CD4-positive, alpha-beta T cell (primary cell): ENCODE measurements at regions of chr15 and their contacts with region 1.

Region 1: GRCh38 chr15:80977627-80978036 is 12.0 kb downstream of the MESD start:
- DNase-seq: peak in 10 of 14 experiments; percentile 21 to 71 (median 42)
- ATAC-seq: peak; percentile 51
- H3K4me3 ChIP-seq: no peak overlapping the region
- H3K4me3 Mint-ChIP-seq: no peak overlapping the region
- H3K27ac ChIP-seq: no peak overlapping the region
- H3K27ac Mint-ChIP-seq: peak overlapping the region; percentile 34
- H3K4me1 ChIP-seq: peaks cover 13% of the 10 kb centered on the region
- H3K4me1 Mint-ChIP-seq: peaks cover 50% of the 10 kb centered on the region
- H3K27me3 ChIP-seq: no peaks in the 10 kb centered on the region
- H3K27me3 Mint-ChIP-seq: no peaks in the 10 kb centered on the region
- CTCF ChIP-seq: no peak

Region 2: GRCh38 chr15:81091889-81092558 is 114.4 kb after region 1 on chr15:
- CTCF ChIA-PET with region 1: no interaction called
- POLR2A ChIA-PET with region 1: no interaction called
- intact Hi-C with region 1: no loop called
- DNase-seq: no peak
- ATAC-seq: no peak
- H3K4me3 ChIP-seq: no peak overlapping the region
- H3K4me3 Mint-ChIP-seq: no peak overlapping the region
- H3K27ac ChIP-seq: no peak overlapping the region
- H3K27ac Mint-ChIP-seq: no peak overlapping the region
- H3K4me1 ChIP-seq: no peaks in the 10 kb centered on the region
- H3K4me1 Mint-ChIP-seq: no peaks in the 10 kb centered on the region
- H3K27me3 ChIP-seq: peaks cover 10 to 21% of the 10 kb centered on the region in 2 experiments
- H3K27me3 Mint-ChIP-seq: peaks cover 53% of the 10 kb centered on the region
- CTCF ChIP-seq: no peak

Region 3: GRCh38 chr15:82371656-82372055 is 1394.0 kb after region 1 on chr15:
- CTCF ChIA-PET with region 1: no interaction called
- POLR2A ChIA-PET with region 1: no interaction called
- intact Hi-C with region 1: loop called in 1 of 2 experiments (anchors 5 kb)
- DNase-seq: no peak
- ATAC-seq: no peak
- H3K4me3 ChIP-seq: no peak overlapping the region
- H3K4me3 Mint-ChIP-seq: no peak overlapping the region
- H3K27ac ChIP-seq: no peak overlapping the region
- H3K27ac Mint-ChIP-seq: no peak overlapping the region
- H3K4me1 ChIP-seq: no peaks in the 10 kb centered on the region
- H3K4me1 Mint-ChIP-seq: peaks cover 7% of the 10 kb centered on the region
- H3K27me3 ChIP-seq: no peaks in the 10 kb centered on the region
- H3K27me3 Mint-ChIP-seq: no peaks in the 10 kb centered on the region
- CTCF ChIP-seq: no peak